ENCODE measurements at regions of chr6 and their contacts with region 1.

Region 1: DNA sequence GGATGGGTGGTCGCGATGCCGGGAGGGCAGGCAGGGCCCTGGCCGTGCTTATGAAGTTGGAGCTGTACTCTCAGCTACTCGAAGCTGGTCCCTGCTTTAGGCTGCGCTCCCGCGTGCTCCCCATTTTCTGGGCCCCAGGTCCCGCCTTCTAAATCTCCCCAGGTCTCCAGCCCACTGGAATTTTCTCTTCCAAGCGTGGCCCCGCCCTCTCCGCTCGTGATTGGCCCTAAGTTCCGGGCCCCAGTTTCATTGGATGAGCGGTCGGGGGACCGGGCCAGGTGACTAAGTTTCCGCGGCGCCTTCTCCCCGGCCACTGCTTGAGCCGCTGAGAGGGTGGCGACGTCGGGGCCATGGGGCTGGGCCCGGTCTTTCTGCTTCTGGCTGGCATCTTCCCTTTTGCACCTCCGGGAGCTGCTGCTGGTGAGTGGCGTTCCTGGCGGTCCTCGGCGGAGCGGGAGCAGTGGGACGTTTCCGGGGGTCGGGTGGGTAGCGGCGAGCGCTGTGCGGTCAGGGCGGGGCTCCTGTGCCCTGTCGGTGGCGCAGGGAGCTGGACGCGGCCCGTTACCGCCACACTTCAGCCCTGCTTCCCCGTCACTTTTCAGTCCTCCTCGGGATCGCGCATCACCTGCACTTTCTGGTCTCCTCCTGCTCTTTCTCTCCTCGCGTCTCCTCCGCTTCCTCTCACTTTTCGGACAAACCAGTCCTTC is at the start of gene MICA:
- DNase-seq: peak; percentile 90 to 93 (median 91)
- ATAC-seq: peak; percentile 54 to 88 (median 68)
- H3K4me3 ChIP-seq: peak within 1 kb of the TSS; percentile 51 to 97 (median 85)
- H3K27ac ChIP-seq: peak within 1 kb of the TSS in 11 of 12 donors; percentile 70 to 100 (median 98)
- H3K4me1 ChIP-seq: peaks cover 7 to 72% (median 59%) of the 10 kb centered on the region in 12 donors
- H3K27me3 ChIP-seq: no peaks in the 10 kb centered on the region
- CTCF ChIP-seq: peak in 1 of 12 donors; percentile 20
- POLR2A ChIP-seq: peak in 1 of 2 donors; percentile 81
- total RNA-seq, gene MICA: 8.9 to 21.0 (median 11.5) TPM

Region 2: DNA sequence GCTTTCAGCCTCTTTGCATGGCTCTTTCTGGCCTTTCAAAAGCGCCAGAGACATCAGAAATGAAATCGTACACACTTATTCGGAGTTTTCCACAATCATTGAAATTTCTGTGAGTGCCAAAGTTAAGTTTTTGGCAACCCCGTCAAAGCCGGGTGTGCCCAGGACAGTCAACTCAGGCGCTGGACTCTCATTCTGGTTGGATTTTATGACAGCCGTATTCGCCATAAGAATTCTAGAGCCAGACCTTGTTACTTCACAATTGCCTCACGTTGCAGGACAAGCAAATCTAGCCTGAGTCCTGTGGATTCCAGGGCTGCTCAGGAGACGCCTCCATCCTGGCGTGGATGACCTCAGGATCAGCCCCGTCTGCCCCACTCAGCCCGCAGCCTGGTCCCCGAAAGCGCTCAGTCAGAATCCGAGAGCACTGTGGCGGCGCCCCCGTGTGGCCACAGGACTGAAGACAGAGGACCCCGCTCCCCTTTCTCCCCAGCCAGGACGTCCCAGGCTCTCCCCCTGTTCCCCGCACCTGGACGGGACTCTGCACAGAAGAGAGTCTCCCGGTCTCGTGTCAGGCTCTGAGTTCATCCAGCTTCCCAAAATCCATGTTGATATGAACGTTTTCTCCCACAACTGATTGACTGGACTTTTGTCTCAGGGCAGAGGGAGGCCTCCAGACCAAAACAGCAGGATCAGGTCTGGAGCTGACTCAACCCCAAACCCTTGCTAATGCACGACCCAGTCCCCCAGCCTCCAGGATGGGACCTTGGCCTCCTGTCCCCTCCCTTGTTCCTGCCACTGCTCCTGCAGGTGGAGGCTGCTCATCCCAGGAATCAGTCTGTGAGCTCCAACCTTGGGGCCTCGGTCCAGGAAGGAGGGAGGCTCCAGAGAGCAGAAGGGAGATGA is 38.2 kb after region 1 on chr6:
- intact Hi-C with region 1: loop called in 3 of 10 experiments (anchors 1 to 2 kb)
- DNase-seq: peak; percentile 77 to 92 (median 84)
- ATAC-seq: peak; percentile 92 to 97 (median 96)
- H3K4me3 ChIP-seq: peak overlapping the region in 9 of 12 donors; percentile 6 to 43 (median 28)
- H3K27ac ChIP-seq: no peak overlapping the region
- H3K4me1 ChIP-seq: peaks cover 0 to 8% (median 2%) of the 10 kb centered on the region in 12 donors
- H3K27me3 ChIP-seq: peaks cover 0 to 10% (median 0%) of the 10 kb centered on the region in 9 donors
- CTCF ChIP-seq: peak; percentile 73 to 91 (median 84)
- POLR2A ChIP-seq: no peak

Region 3: GRCh38 chr6:31474871-31475286 is 71.4 kb after region 1 on chr6:
- intact Hi-C with region 1: no loop called
- DNase-seq: no peak
- ATAC-seq: no peak
- H3K4me3 ChIP-seq: no peak overlapping the region
- H3K27ac ChIP-seq: no peak overlapping the region
- H3K4me1 ChIP-seq: peaks cover 0 to 25% (median 0%) of the 10 kb centered on the region in 12 donors
- H3K27me3 ChIP-seq: no peaks in the 10 kb centered on the region
- CTCF ChIP-seq: peak in 4 of 12 donors; percentile 13 to 24 (median 20)
- POLR2A ChIP-seq: no peak

Region 4: GRCh38 chr6:31541658-31542521 is 138.5 kb after region 1 on chr6 and contains the start of gene DDX39B:
- intact Hi-C with region 1: loop called in 1 of 10 experiments (anchors 5 kb)
- DNase-seq: peak; percentile 96 to 97 (median 97)
- ATAC-seq: peak; percentile 92 to 95 (median 94)
- H3K4me3 ChIP-seq: peak within 1 kb of the TSS; percentile 48 to 95 (median 79)
- H3K27ac ChIP-seq: peak within 1 kb of the TSS; percentile 90 to 99 (median 95)
- H3K4me1 ChIP-seq: peaks cover 3 to 52% (median 35%) of the 10 kb centered on the region in 12 donors
- H3K27me3 ChIP-seq: no peaks in the 10 kb centered on the region
- CTCF ChIP-seq: no peak
- POLR2A ChIP-seq: peak in 1 of 2 donors; percentile 63
- total RNA-seq, gene DDX39B: 122 to 209 (median 164) TPM